ENCODE measurements at regions of chr13 and their contacts with region 1.

Region 1: DNA sequence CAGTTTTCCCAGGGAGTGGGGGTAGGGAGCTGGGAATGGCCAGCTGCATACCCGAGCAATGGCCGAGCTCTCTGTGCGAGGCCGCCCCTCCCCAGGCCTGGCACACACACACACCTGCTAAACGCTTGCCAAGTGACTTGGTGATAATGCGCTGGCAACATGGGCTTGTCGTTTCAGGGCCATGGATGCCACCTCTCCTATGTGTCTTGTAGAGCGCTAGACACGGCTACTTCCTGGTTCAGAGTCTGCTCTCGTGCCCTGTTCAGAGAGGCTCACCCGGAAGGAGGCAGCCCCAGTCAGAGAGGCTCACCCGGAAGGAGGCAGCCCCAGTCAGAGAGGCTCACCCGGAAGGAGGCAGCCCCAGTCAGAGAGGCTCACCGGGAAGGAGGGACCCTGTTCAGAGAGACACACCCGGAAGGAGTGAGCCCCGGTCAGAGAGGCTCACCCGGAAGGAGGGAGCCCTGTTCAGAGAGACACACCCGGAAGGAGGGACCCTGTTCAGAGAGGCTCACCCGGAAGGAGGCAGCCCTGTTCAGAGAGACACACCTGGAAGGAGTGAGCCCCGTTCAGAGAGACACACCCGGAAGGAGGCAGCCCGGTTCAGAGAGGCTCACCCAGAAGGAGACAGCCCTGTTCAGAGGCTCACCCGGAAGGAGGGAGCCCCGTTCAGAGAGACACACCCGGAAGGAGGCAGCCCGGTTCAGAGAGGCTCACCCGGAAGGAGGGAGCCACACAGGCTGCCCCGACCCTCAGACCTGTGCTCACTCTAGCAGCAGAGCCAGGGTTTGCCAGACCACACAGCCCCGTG is 4.2 kb downstream of the ADPRHL1 start:
- DNase-seq: peak; percentile 91
- ATAC-seq: peak; percentile 79
- H3K4me3 ChIP-seq: peak overlapping the region; percentile 63 to 77 (median 75)
- H3K27ac ChIP-seq: peak overlapping the region; percentile 91
- H3K4me1 ChIP-seq: peaks cover 40% of the 10 kb centered on the region
- H3K27me3 ChIP-seq: no peaks in the 10 kb centered on the region
- CTCF ChIP-seq: no peak; the same call in 1 of the 2 replicates
- EP300 ChIP-seq: peak in 1 of 2 experiments; percentile 3; a peak in 2 of 4 replicates
- POLR2A ChIP-seq: peak; percentile 65 to 75
- RAD21 ChIP-seq: no peak

Region 2: GRCh38 chr13:113098162-113098732 is 350.8 kb before region 1 on chr13:
- CTCF ChIA-PET with region 1: no interaction called
- POLR2A ChIA-PET with region 1: no interaction called
- in situ Hi-C with region 1: no loop called
- intact Hi-C with region 1: no loop called
- DNase-seq: no peak
- ATAC-seq: no peak
- H3K4me3 ChIP-seq: no peak overlapping the region
- H3K27ac ChIP-seq: no peak overlapping the region
- H3K4me1 ChIP-seq: peaks cover 13% of the 10 kb centered on the region
- H3K27me3 ChIP-seq: no peaks in the 10 kb centered on the region
- CTCF ChIP-seq: no peak
- EP300 ChIP-seq: no peak
- POLR2A ChIP-seq: no peak
- RAD21 ChIP-seq: no peak

Region 3: GRCh38 chr13:113129921-113130750 is 319.0 kb before region 1 on chr13:
- CTCF ChIA-PET with region 1: no interaction called
- POLR2A ChIA-PET with region 1: no interaction called
- in situ Hi-C with region 1: no loop called
- intact Hi-C with region 1: no loop called
- DNase-seq: no peak
- ATAC-seq: no peak
- H3K4me3 ChIP-seq: no peak overlapping the region
- H3K27ac ChIP-seq: no peak overlapping the region
- H3K4me1 ChIP-seq: peaks cover 21% of the 10 kb centered on the region; the same call in 1 of the 2 replicates
- H3K27me3 ChIP-seq: no peaks in the 10 kb centered on the region
- CTCF ChIP-seq: no peak
- EP300 ChIP-seq: no peak
- POLR2A ChIP-seq: no peak
- RAD21 ChIP-seq: no peak

Region 4: GRCh38 chr13:113398963-113399661 is 50.0 kb before region 1 on chr13:
- CTCF ChIA-PET with region 1: interaction called, 3 read pairs
- POLR2A ChIA-PET with region 1: interaction called, 4 read pairs
- in situ Hi-C with region 1: no loop called
- intact Hi-C with region 1: loop called (anchors 5 kb)
- DNase-seq: no peak
- ATAC-seq: peak; percentile 3
- H3K4me3 ChIP-seq: peak overlapping the region in 1 of 3 experiments; percentile 32; a peak in 1 of 6 replicates
- H3K27ac ChIP-seq: no peak overlapping the region
- H3K4me1 ChIP-seq: peaks cover 74% of the 10 kb centered on the region
- H3K27me3 ChIP-seq: peaks cover 10 to 53% of the 10 kb centered on the region in 2 experiments
- CTCF ChIP-seq: no peak
- EP300 ChIP-seq: no peak
- POLR2A ChIP-seq: no peak
- RAD21 ChIP-seq: no peak

Region 5: GRCh38 chr13:113405481-113406300 is 43.4 kb before region 1 on chr13:
- CTCF ChIA-PET with region 1: interaction called, 3 read pairs
- POLR2A ChIA-PET with region 1: no interaction called
- in situ Hi-C with region 1: loop called (anchors 5 kb)
- intact Hi-C with region 1: no loop called
- DNase-seq: no peak
- ATAC-seq: peak; percentile 61
- H3K4me3 ChIP-seq: peak overlapping the region in 1 of 3 experiments; percentile 59; a peak in 2 of 6 replicates
- H3K27ac ChIP-seq: no peak overlapping the region
- H3K4me1 ChIP-seq: peaks cover 57% of the 10 kb centered on the region
- H3K27me3 ChIP-seq: peaks cover 17 to 93% of the 10 kb centered on the region in 2 experiments
- CTCF ChIP-seq: peak; percentile 68
- EP300 ChIP-seq: no peak
- POLR2A ChIP-seq: no peak
- RAD21 ChIP-seq: peak; percentile 55; the same call in 1 of the 2 replicates

Measured in HepG2 (cell line).